ENCODE measurements at regions of chr20 and their contacts with region 1.

Region 1: GRCh38 chr20:7257692-7258466 is 490.4 kb downstream of the BMP2 start:
- DNase-seq: peak; percentile 18 to 37
- ATAC-seq: peak; percentile 77 to 99 (median 95)
- H3K4me3 ChIP-seq: peak overlapping the region in 9 of 10 donors; percentile 19 to 54 (median 36)
- H3K27ac ChIP-seq: peak overlapping the region; percentile 42 to 86 (median 73)
- H3K4me1 ChIP-seq: peaks cover 0 to 15% (median 0%) of the 10 kb centered on the region in 9 donors
- H3K27me3 ChIP-seq: no peaks in the 10 kb centered on the region
- CTCF ChIP-seq: no peak

Region 2: DNA sequence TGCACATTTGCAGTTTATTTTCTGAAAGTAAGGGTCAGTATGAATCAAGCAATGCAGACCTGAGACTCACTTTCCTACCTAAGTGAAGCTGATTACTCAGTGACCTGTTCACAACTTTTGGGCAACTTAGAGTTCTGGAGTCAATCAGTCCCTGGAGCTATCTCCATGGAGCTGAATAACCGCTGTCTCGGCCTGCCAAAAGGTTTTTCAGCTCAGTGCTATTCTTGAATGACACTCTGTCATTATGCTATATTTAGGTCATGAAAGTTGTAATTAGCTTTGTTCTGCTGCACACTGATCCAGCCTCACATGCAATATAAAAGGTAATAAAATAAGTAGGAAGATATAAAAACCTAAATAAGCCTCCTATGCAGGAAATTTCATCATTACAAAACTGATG is 134.4 kb before region 1 on chr20:
- intact Hi-C with region 1: loop called in 2 of 10 experiments (anchors 10 kb)
- DNase-seq: peak; percentile 9 to 42
- ATAC-seq: peak; percentile 87 to 100 (median 99)
- H3K4me3 ChIP-seq: no peak overlapping the region
- H3K27ac ChIP-seq: peak overlapping the region; percentile 11 to 85 (median 71)
- H3K4me1 ChIP-seq: peaks cover 0 to 14% (median 0%) of the 10 kb centered on the region in 9 donors
- H3K27me3 ChIP-seq: no peaks in the 10 kb centered on the region
- CTCF ChIP-seq: no peak

Measured in heart right ventricle (tissue), 16 donors.